Naive thymus-derived CD4-positive, alpha-beta T cell (primary cell): ENCODE measurements at regions of chr6 and their contacts with region 1.

Region 1: DNA sequence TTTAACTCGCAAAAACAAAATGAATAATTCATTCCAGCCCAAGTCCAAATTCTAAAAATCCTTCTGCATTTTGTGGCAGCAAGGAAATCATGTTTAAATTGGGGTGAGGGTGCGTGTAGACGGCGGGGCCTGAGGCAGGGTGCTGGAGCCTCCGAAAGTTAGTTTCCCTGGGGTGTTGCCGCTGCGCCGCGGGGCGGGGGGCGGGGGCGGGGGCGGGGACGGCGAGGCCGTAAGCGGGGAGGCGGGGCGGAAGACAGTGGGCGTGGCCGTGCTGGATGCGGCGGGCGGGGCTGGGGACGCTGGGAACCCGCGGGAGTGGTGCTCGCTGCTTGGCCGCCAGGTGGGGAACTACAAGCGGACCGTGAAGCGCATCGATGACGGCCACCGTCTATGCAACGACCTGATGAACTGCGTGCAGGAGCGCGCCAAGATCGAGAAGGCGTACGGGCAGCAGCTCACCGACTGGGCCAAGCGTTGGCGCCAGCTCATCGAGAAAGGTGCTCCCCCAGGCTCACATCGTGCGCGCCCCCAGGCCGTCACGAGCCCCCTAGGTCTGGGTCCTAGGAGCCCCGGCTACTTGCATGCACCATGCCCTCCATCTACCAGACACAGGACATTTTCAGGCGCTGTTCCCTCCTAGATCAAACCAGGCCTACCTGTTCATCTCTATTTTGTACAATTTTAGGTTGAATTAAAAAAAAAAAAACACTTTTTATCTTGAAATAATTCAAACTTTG is 29.0 kb downstream of the SPDEF start:
- DNase-seq: peak; percentile 88 to 96 (median 94)
- ATAC-seq: peak; percentile 100
- H3K4me3 ChIP-seq: peak overlapping the region; percentile 33
- H3K4me3 Mint-ChIP-seq: peak overlapping the region; percentile 20 to 69 (median 46)
- H3K27ac ChIP-seq: peak overlapping the region; percentile 70
- H3K27ac Mint-ChIP-seq: peak overlapping the region; percentile 12 to 89 (median 72)
- H3K4me1 ChIP-seq: peaks cover 7 to 14% of the 10 kb centered on the region in 2 donors
- H3K4me1 Mint-ChIP-seq: peaks cover 4 to 12% (median 8%) of the 10 kb centered on the region in 7 donors
- H3K27me3 ChIP-seq: no peaks in the 10 kb centered on the region
- H3K27me3 Mint-ChIP-seq: peaks cover 0 to 2% (median 0%) of the 10 kb centered on the region in 5 donors

Region 2: DNA sequence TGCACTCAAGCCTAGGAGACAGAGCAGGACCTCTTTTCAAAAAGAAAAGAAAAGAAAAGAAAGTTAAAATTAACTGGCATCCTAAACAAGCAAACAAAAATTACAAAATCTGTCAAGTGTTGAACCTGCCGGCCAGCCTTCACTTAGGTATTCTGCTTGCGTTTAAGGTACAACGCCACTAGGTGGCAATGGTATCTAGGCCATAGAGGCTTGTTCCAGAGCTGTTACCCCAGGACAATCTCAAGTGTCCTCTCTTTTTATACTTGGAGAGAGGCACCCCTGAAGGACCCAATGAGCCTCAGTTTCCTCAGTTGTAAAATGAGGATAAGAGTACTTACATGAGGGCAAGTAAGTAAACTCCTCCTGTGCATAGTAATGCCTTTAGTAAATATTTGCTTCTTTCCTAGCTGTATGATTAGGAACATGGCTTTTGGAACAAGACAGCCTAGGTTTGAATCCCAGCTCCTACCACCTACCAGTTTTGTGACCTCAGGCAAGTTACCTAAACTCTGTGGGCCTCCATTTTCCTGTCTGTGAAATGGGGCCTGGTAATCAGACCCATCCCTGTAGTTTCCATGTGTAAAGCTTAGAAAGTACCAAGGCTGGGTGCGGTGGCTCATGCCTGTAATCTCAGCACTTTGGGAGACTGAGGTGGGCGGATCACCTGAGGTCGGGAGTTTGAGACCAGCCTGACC is 67.1 kb before region 1 on chr6:
- CTCF ChIA-PET with region 1: interaction called, 3 read pairs
- POLR2A ChIA-PET with region 1: no interaction called
- intact Hi-C with region 1: loop called in 1 of 2 experiments (anchors 1 kb)
- DNase-seq: peak in 8 of 9 donors; percentile 23 to 55 (median 50)
- ATAC-seq: peak; percentile 82
- H3K4me3 ChIP-seq: no peak overlapping the region
- H3K4me3 Mint-ChIP-seq: no peak overlapping the region
- H3K27ac ChIP-seq: no peak overlapping the region
- H3K27ac Mint-ChIP-seq: no peak overlapping the region
- H3K4me1 ChIP-seq: no peaks in the 10 kb centered on the region
- H3K4me1 Mint-ChIP-seq: peaks cover 0 to 2% (median under 1%) of the 10 kb centered on the region in 7 donors
- H3K27me3 ChIP-seq: no peaks in the 10 kb centered on the region
- H3K27me3 Mint-ChIP-seq: peaks cover 4 to 24% (median 17%) of the 10 kb centered on the region in 5 donors

Region 3: DNA sequence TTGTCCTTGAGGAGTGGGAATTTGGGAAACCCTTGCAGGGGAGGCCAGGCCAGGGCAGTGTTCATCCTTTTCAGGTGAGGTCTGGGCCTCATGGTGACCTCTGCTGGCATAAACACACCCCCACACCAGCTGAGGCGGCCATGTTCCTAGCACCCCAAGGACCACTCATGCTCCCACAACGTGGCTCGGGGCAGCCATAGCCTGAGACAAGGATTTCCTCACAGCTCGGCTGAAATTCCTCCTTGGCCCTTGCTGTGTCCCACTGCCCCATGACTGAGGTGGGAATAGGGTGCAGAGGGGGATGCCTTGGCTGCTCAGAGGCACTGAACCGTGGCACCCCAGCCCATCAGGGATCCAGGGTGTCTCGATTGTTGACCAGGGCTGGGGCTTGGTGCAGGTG is 56.3 kb after region 1 on chr6:
- CTCF ChIA-PET with region 1: interaction called, 3 read pairs
- POLR2A ChIA-PET with region 1: no interaction called
- intact Hi-C with region 1: loop called in 1 of 2 experiments (anchors 1 kb)
- DNase-seq: no peak
- ATAC-seq: peak; percentile 60
- H3K4me3 ChIP-seq: no peak overlapping the region
- H3K4me3 Mint-ChIP-seq: no peak overlapping the region
- H3K27ac ChIP-seq: no peak overlapping the region
- H3K27ac Mint-ChIP-seq: peak overlapping the region in 2 of 9 donors; percentile 42 to 73
- H3K4me1 ChIP-seq: no peaks in the 10 kb centered on the region
- H3K4me1 Mint-ChIP-seq: peaks cover 0 to 11% (median 0%) of the 10 kb centered on the region in 7 donors
- H3K27me3 ChIP-seq: no peaks in the 10 kb centered on the region
- H3K27me3 Mint-ChIP-seq: no peaks in the 10 kb centered on the region